Mammary epithelial cell (primary cell): ENCODE measurements at regions of chr15 and their contacts with region 1.

Region 1: DNA sequence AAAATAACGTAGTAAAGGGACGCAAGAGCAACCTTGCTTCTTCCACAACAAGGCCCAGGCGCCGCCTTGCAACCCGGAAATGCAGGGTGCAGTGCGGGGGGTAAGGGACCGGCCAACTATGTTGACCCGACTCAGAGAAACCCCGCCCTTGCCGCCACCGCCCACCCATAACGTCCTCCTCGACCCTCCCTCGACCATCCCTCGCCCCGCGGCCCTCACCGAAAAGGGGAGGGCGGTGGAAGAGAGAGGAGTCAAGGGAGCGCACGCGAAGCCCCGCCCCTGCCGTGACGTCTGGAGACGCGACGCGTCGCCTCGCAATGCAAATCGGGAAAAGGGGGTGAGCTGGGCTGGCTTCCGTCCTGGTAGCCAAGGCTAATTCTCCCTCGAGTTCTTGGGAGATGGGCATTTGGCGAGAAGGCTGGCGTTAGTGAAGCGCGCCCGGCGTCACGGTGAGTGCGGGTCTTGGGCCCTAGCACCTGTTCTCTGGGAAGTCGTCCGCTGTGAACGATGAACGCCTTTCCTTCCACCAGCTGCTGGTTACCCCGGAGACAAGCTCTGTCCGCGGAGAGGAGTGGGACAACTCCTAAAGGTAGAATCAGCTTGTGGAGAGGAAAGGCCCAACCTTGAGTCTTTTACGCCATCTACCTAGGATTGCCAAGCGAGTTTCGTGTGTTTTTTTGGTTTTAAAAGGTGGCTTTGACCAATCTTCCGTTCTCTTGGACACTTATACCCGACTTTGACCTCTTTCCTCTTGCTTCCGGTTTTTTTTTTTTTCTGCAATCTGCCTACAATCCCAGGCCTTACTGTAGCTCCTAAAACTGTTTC is at the start of gene USP8:
- DNase-seq: peak; percentile 96
- H3K4me3 ChIP-seq: peak within 1 kb of the TSS; percentile 93 to 99 (median 94)
- H3K27ac ChIP-seq: peak within 1 kb of the TSS; percentile 93
- H3K4me1 ChIP-seq: peaks cover 9% of the 10 kb centered on the region
- H3K27me3 ChIP-seq: no peaks in the 10 kb centered on the region
- CTCF ChIP-seq: no peak
- total RNA-seq, gene USP8: 47.7 to 61.6 TPM

Region 2: DNA sequence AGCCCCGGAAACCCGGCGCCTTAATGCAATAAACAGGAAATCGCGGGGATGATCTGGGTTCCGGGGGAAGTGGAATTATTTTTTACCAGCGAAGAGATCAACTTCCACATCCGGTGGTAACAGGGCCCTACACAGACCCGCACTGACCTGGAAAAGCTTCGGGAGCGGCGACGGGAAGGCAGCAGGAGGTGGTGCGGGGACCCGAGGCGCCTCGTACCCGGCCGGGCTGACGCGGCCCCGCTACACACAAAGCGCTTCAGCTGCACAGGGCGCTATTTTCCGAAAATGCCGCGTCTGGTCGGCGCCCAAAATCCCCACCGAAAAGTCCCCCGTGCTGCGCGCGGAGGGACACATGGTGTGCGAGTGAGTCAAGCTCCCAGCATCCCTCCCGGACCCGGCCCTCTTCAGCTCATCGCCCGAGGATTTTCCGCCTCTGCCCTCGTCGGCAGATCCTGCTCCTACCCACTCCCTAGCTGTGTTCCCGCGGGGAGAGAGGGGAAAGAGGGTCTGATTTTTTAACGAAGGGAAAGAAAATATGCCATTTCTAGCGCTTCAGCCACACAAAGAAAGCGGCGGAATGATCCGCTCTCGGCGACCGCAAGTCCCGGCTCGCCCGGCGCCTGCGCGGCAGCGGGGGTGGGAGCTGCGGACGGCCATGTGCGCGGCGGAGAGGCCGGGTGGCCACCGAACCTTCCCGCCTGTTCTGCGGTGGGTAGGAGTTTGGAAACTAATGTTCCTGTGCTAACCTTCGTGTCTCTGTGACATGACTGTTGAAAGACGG is 69.2 kb before region 1 on chr15 and contains the start of gene GABPB1:
- CTCF ChIA-PET with region 1: no interaction called
- dilution Hi-C with region 1: no loop called
- in situ Hi-C with region 1: no loop called
- intact Hi-C with region 1: loop called (anchors 1 kb)
- DNase-seq: peak; percentile 95
- H3K4me3 ChIP-seq: peak within 1 kb of the TSS; percentile 74 to 91 (median 81)
- H3K27ac ChIP-seq: peak within 1 kb of the TSS; percentile 100
- H3K4me1 ChIP-seq: peaks cover 7% of the 10 kb centered on the region
- H3K27me3 ChIP-seq: no peaks in the 10 kb centered on the region
- CTCF ChIP-seq: no peak
- total RNA-seq, gene GABPB1: 21.1 to 38.7 TPM

Region 3: GRCh38 chr15:50476143-50476542 is 51.9 kb after region 1 on chr15:
- CTCF ChIA-PET with region 1: no interaction called
- dilution Hi-C with region 1: no loop called
- in situ Hi-C with region 1: no loop called
- intact Hi-C with region 1: no loop called
- DNase-seq: no peak
- H3K4me3 ChIP-seq: no peak overlapping the region
- H3K27ac ChIP-seq: no peak overlapping the region
- H3K4me1 ChIP-seq: no peaks in the 10 kb centered on the region
- H3K27me3 ChIP-seq: no peaks in the 10 kb centered on the region
- CTCF ChIP-seq: no peak

Region 4: DNA sequence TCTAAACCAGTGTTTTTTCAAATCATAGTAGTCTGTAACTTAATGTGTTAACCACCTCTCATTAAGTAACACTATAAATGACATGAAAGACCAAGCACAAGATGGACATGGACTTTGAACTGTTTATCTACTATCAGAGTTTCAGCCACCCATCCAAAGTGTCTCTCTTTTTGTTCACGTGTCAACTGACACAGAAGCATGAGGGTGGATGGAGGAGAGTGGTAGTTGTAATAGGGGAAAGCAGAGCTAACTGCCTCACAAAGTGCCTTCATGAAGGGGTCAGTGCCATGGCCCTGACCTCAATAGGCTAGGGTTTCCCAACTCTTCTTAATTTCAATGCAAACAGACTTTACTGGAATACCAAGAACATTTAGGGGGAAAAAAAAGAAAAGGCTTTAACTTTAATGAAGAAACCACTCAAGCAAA is 294.4 kb after region 1 on chr15:
- CTCF ChIA-PET with region 1: no interaction called
- dilution Hi-C with region 1: no loop called
- in situ Hi-C with region 1: no loop called
- intact Hi-C with region 1: no loop called
- DNase-seq: no peak
- H3K4me3 ChIP-seq: no peak overlapping the region
- H3K27ac ChIP-seq: no peak overlapping the region
- H3K4me1 ChIP-seq: no peaks in the 10 kb centered on the region
- H3K27me3 ChIP-seq: no peaks in the 10 kb centered on the region
- CTCF ChIP-seq: no peak